Spleen (tissue), 13 donors: ENCODE measurements at regions of chr17 and their contacts with region 1.

Region 1: GRCh38 chr17:76005263-76006149 is 4.9 kb downstream of the CDK3 start:
- DNase-seq: peak; percentile 93
- H3K4me3 ChIP-seq: no peak overlapping the region
- H3K27ac ChIP-seq: peak overlapping the region in 3 of 8 donors; percentile 6 to 47 (median 21)
- H3K4me1 ChIP-seq: peaks cover 7 to 36% (median 20%) of the 10 kb centered on the region in 6 donors
- H3K27me3 ChIP-seq: no peaks in the 10 kb centered on the region
- CTCF ChIP-seq: peak; percentile 36 to 85 (median 79)
- POLR2A ChIP-seq: no peak

Region 2: GRCh38 chr17:75904749-75905521 is 100.6 kb before region 1 on chr17 and contains the start of gene MRPL38:
- intact Hi-C with region 1: loop called (anchors 2 kb)
- DNase-seq: peak; percentile 99
- H3K4me3 ChIP-seq: peak within 1 kb of the TSS; percentile 69 to 96 (median 90)
- H3K27ac ChIP-seq: peak within 1 kb of the TSS; percentile 86 to 95 (median 93)
- H3K4me1 ChIP-seq: peaks cover 5 to 44% (median 27%) of the 10 kb centered on the region in 6 donors
- H3K27me3 ChIP-seq: no peaks in the 10 kb centered on the region
- CTCF ChIP-seq: peak; percentile 99 to 100 (median 100)
- POLR2A ChIP-seq: peak in 1 of 3 donors; percentile 26
- total RNA-seq, gene MRPL38: 40.1 to 90.6 (median 74.7) TPM

Region 3: GRCh38 chr17:75959051-75959838 is 46.3 kb before region 1 on chr17:
- intact Hi-C with region 1: no loop called
- DNase-seq: no peak
- H3K4me3 ChIP-seq: no peak overlapping the region
- H3K27ac ChIP-seq: peak overlapping the region in 2 of 8 donors; percentile 15 to 30
- H3K4me1 ChIP-seq: peaks cover 0 to 34% (median 8%) of the 10 kb centered on the region in 6 donors
- H3K27me3 ChIP-seq: no peaks in the 10 kb centered on the region
- CTCF ChIP-seq: no peak
- POLR2A ChIP-seq: no peak

Region 4: GRCh38 chr17:76107509-76107908 is 102.0 kb after region 1 on chr17:
- intact Hi-C with region 1: no loop called
- DNase-seq: no peak
- H3K4me3 ChIP-seq: no peak overlapping the region
- H3K27ac ChIP-seq: no peak overlapping the region
- H3K4me1 ChIP-seq: peaks cover 4 to 30% (median 15%) of the 10 kb centered on the region in 6 donors
- H3K27me3 ChIP-seq: peaks cover 0 to 6% (median 0%) of the 10 kb centered on the region in 7 donors
- CTCF ChIP-seq: peak in 4 of 11 experiments; percentile 12 to 28 (median 16)
- POLR2A ChIP-seq: no peak